Endothelial cell of umbilical vein (primary cell): ENCODE measurements at regions of chr19 and their contacts with region 1.

Region 1: DNA sequence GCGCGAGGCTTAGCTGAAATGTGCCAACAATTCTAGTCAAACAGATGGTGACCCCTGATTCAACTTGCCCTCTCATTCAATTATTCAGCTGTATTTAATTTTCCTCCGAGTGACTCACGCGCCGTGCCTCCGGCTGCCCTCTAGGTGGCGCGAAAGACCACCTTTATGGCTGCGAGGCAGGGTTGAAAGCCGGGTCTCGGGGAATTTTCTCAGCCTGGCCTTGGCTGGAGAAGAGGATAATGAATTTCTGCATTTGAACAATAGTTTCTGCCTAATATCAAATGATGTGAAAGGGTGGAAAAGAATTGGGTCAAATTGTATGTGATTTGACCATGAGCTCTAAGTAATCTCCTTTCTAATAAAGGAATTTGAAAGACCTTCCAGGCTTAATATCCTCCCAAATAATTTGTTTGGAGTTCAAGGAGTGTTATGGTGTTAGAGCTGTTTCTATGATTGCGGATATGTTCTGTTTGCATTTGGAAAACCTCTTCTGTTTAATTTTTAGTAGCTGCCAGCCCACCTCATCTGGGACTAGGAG is 310.9 kb downstream of the ZNF536 start:
- DNase-seq: peak; percentile 83
- H3K4me3 ChIP-seq: no peak overlapping the region
- H3K27ac ChIP-seq: no peak overlapping the region
- H3K4me1 ChIP-seq: peaks cover 4% of the 10 kb centered on the region
- H3K27me3 ChIP-seq: no peaks in the 10 kb centered on the region
- CTCF ChIP-seq: peak; percentile 78 to 94
- POLR2A ChIP-seq: no peak

Region 2: GRCh38 chr19:30406220-30407067 is 276.6 kb before region 1 on chr19:
- CTCF ChIA-PET with region 1: no interaction called
- POLR2A ChIA-PET with region 1: no interaction called
- dilution Hi-C with region 1: no loop called
- intact Hi-C with region 1: no loop called
- DNase-seq: no peak
- H3K4me3 ChIP-seq: no peak overlapping the region
- H3K27ac ChIP-seq: no peak overlapping the region
- H3K4me1 ChIP-seq: no peaks in the 10 kb centered on the region
- H3K27me3 ChIP-seq: no peaks in the 10 kb centered on the region
- CTCF ChIP-seq: no peak
- POLR2A ChIP-seq: no peak

Region 3: GRCh38 chr19:30450100-30450499 is 233.0 kb before region 1 on chr19:
- CTCF ChIA-PET with region 1: no interaction called
- POLR2A ChIA-PET with region 1: no interaction called
- dilution Hi-C with region 1: no loop called
- intact Hi-C with region 1: no loop called
- DNase-seq: no peak
- H3K4me3 ChIP-seq: no peak overlapping the region
- H3K27ac ChIP-seq: no peak overlapping the region
- H3K4me1 ChIP-seq: no peaks in the 10 kb centered on the region
- H3K27me3 ChIP-seq: no peaks in the 10 kb centered on the region
- CTCF ChIP-seq: no peak
- POLR2A ChIP-seq: no peak

Region 4: DNA sequence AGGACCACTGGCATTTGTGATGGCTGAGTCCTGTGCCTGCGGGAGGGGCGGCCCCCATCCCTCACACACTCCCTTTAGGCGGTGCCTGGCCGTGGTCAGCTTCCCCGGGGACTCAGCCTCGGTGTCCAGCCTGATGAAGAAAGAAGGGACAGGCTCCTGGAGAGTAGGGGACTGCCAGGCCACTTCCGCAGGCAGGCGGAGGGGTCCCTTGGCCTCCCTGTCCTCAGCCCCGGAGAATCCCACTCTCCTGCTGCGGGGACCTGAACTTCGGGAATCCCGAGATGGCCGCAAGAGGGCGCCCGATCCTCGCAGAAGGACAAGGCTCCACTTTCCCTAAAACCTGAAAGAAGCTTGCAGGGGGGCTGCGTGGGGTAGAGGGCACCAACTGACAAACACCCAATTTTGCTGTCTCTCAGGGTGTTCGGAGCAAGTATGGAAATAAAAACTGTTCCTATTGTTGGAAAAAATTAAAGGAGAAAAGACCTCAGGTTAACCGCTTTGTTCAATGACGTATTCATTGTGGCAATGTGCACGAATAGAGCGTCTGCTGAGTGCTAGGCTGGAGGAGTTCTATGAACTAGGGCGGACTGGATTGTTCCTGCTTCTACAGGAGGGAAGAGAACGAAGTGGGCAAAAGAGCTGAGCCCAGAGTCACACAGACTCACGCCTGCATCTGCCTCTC is 13.6 kb before region 1 on chr19:
- CTCF ChIA-PET with region 1: interaction called, 42 read pairs
- POLR2A ChIA-PET with region 1: no interaction called
- dilution Hi-C with region 1: no loop called
- intact Hi-C with region 1: no loop called
- DNase-seq: peak; percentile 29
- H3K4me3 ChIP-seq: no peak overlapping the region
- H3K27ac ChIP-seq: no peak overlapping the region
- H3K4me1 ChIP-seq: no peaks in the 10 kb centered on the region
- H3K27me3 ChIP-seq: no peaks in the 10 kb centered on the region
- CTCF ChIP-seq: peak; percentile 68 to 85
- POLR2A ChIP-seq: no peak

Region 5: GRCh38 chr19:31214086-31214485 is 531.0 kb after region 1 on chr19:
- CTCF ChIA-PET with region 1: no interaction called
- POLR2A ChIA-PET with region 1: no interaction called
- dilution Hi-C with region 1: no loop called
- intact Hi-C with region 1: no loop called
- DNase-seq: peak; percentile 17
- H3K4me3 ChIP-seq: no peak overlapping the region
- H3K27ac ChIP-seq: peak overlapping the region; percentile 39
- H3K4me1 ChIP-seq: peaks cover 2% of the 10 kb centered on the region
- H3K27me3 ChIP-seq: no peaks in the 10 kb centered on the region
- CTCF ChIP-seq: no peak
- POLR2A ChIP-seq: no peak

Region 6: GRCh38 chr19:31356587-31357314 is 673.7 kb after region 1 on chr19:
- CTCF ChIA-PET with region 1: interaction called, 7 read pairs
- POLR2A ChIA-PET with region 1: no interaction called
- dilution Hi-C with region 1: no loop called
- intact Hi-C with region 1: loop called (anchors 1 kb)
- DNase-seq: no peak
- H3K4me3 ChIP-seq: no peak overlapping the region
- H3K27ac ChIP-seq: no peak overlapping the region
- H3K4me1 ChIP-seq: no peaks in the 10 kb centered on the region
- H3K27me3 ChIP-seq: peaks cover 48 to 53% of the 10 kb centered on the region in 2 experiments
- CTCF ChIP-seq: peak; percentile 30 to 66
- POLR2A ChIP-seq: no peak

Region 7: GRCh38 chr19:32201636-32202051 is 1518.6 kb after region 1 on chr19:
- CTCF ChIA-PET with region 1: interaction called, 6 read pairs
- POLR2A ChIA-PET with region 1: no interaction called
- dilution Hi-C with region 1: no loop called
- intact Hi-C with region 1: loop called (anchors 1 kb)
- DNase-seq: peak; percentile 61
- H3K4me3 ChIP-seq: no peak overlapping the region
- H3K27ac ChIP-seq: no peak overlapping the region
- H3K4me1 ChIP-seq: peaks cover 6% of the 10 kb centered on the region
- H3K27me3 ChIP-seq: no peaks in the 10 kb centered on the region
- CTCF ChIP-seq: no peak
- POLR2A ChIP-seq: no peak